Lower leg skin (tissue), 4 donors: ENCODE measurements at regions of chr11 and their contacts with region 1.

Region 1: DNA sequence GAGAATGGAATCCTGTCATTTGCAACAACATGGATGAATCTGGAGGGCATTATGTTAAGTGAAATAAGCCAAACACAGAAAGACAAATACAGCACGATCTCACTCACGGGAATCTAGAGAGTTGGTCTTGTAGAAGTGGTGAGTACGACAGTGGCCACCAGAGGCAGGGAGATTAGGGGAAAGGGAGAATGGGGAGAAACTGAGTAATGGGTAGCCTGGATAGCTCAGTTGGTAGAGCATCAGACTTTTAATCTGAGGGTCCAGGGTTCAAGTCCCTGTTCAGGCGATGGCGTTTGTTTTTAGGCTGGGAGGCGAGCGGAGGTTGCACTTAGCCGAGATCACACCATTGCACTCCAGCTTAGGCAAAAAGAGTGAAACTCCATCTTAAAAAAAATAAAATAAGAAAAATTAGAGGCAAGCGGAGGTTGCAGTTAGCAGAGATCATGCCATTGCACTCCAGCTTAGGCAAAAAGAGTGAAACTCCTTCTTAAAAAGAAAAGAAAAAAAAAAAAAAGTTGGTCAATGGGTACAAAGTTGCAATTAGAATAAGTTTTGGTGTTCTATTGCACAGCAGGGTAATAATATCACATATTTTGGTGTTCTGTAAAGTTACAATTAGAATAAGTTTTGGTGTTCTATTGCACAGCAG is 95.7 kb upstream of the UBASH3B start:
- DNase-seq: no peak
- H3K4me3 ChIP-seq: no peak overlapping the region
- CTCF ChIP-seq: no peak
- POLR2A ChIP-seq: no peak

Region 2: DNA sequence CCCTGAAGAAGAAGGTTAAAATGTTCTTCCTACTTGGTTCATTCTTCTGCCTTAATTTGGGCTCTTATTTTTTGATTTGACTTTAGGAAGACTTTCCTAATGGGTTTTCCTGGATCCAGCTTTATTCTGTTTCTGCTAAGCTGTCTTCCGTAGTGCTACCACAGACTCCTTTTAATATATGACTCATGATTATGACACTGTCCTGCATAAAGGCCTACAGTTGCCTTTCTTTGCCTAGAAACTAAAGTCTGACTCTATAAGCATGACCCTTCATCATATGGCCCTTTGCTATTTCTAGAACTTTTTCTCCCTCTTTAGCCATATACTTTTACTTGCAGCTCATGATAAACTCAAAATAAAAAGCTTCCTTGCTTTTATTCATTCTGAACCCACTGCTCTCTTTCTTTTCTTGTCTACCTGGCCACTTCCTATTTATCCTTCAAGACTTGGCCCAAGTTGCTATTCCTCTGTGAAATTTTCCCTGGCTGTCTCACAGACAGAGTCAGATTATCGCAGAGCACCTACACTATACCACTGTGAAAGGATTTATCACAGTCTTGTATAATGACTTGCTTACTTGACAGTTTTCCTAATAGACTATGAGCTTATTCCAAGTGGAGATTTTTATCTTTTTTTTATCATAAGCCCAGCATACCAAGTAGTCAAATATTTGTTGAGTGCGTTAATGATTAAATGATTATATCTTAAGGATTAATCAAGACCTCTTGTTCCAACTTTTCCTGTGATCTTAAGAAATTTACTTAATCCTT is 1511.2 kb before region 1 on chr11:
- intact Hi-C with region 1: loop called (anchors 5 kb)
- DNase-seq: no peak
- H3K4me3 ChIP-seq: no peak overlapping the region
- CTCF ChIP-seq: no peak
- POLR2A ChIP-seq: no peak